Activated CD8-positive, alpha-beta memory T cell treated with anti-CD3 and anti-CD28 coated beads, Interleukin-2, amount 10 ng/mL, durations not matched to agents 7 days and 5 days (primary cell): ENCODE measurements at regions of chr19 and their contacts with region 1.

Region 1: GRCh38 chr19:55418185-55418584 is 10.6 kb upstream of the UBE2S start:
- DNase-seq: peak; percentile 68
- ATAC-seq: peak; percentile 72
- H3K4me3 Mint-ChIP-seq: no peak overlapping the region
- H3K27ac Mint-ChIP-seq: no peak overlapping the region
- H3K4me1 Mint-ChIP-seq: peaks cover 16% of the 10 kb centered on the region
- H3K27me3 Mint-ChIP-seq: peaks cover 13% of the 10 kb centered on the region

Region 2: DNA sequence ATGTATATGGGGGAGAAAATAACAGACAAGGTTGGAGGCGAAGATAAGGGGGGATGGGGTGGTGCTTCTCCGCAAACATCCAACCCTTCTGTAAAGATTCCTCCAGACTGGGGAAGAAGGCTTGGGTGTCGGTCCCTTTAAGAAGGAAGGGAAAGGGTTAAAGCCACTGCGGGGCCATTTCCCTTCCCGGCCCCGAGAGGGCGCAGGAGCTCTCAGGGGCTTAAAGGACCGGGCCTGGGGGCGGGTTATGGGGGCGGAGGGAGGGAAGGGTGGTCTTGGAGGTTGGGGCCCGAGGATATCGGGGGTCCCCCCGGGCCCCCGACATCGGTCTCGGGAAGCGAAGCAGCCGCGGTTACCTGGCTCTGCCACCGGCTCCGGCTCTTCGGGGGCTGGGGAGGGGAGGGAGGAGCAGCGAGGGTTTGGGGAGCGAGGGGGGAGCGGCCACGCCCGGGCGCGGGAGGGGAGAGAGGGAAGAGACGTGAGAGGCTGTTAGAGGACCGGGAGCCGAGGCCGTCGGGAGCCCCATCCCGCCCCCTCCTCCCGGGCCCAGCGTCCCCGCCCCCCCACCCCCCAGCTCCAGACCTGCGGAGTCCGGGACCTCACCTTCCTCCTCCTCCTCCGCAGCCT is 272.0 kb before region 1 on chr19:
- CTCF ChIA-PET with region 1: interaction called, 25 read pairs
- DNase-seq: peak; percentile 56
- ATAC-seq: peak; percentile 51
- H3K4me3 Mint-ChIP-seq: no peak overlapping the region
- H3K27ac Mint-ChIP-seq: no peak overlapping the region
- H3K4me1 Mint-ChIP-seq: peaks cover 6% of the 10 kb centered on the region
- H3K27me3 Mint-ChIP-seq: peaks cover 56% of the 10 kb centered on the region

Region 3: DNA sequence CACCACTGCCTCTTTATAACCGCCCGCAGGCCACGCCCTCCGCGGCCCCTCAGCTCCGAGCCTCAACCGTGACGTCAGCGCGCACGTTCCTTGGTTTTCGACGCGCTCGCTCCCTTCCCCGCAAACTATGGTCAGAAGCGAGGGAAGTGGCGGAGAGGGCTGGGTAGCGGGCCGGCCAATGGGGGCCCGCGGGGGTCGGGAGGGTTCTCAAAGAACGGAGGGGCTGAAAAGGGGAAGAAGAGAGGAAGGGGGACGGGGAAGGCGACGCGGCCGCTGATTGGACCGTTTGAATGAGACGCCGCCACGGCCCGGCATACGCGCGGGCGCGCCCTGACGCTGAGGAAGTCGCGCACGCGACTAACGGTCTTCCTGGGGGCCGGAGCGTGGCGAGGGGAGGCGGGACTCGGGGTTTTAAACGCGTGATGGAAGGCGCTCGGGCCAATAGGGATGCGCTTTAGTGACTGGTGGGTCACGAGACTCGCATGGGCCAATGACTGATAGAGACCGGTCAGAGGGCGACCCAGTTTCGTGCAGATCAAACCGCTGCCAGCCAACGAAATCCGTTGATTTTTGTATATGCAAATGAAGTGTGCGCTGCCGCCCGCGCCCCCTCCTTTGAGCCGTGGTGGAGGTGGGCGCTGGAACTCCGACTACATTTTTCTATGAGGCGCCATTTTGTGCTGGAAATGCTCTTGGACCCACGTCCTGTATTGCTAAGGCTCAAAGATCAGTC is 10.2 kb before region 1 on chr19:
- CTCF ChIA-PET with region 1: interaction called, 12 read pairs
- DNase-seq: peak; percentile 99
- ATAC-seq: peak; percentile 92
- H3K4me3 Mint-ChIP-seq: peak overlapping the region; percentile 88
- H3K27ac Mint-ChIP-seq: peak overlapping the region; percentile 97
- H3K4me1 Mint-ChIP-seq: peaks cover 39% of the 10 kb centered on the region
- H3K27me3 Mint-ChIP-seq: peaks cover 5% of the 10 kb centered on the region